Activated CD4-positive, alpha-beta memory T cell treated with anti-CD3 and anti-CD28 coated beads for 36 hours (primary cell): ENCODE measurements at regions of chr6 and their contacts with region 1.

Region 1: DNA sequence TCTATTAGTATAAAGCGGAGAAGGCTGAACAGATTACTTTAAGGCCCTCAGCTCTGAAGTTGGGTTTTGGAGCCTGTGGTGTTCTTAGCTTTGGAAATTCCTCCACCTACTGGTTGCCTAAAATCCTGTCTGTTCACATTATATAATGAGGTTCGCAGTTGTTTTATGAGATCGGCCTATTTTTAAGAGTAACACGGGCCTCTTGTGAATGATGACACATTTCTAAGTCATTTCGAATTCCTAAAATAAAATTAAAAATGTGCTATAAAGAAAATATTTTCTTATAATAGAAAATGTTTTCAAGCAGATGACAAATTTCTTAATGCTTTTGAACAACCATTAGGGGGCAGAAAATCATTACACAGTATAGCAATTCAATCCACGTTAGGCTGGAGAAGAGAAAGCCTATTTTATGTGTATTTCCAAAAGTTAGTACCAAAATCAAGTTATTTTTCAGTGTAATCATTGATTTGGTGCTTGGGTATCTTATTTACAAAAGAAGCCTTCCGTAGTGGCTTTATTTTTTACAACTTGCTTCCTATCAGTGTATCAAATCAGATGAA is 15.8 kb upstream of the FAM8A1 start:
- DNase-seq: no peak
- H3K4me3 Mint-ChIP-seq: no peak overlapping the region
- H3K27ac Mint-ChIP-seq: no peak overlapping the region
- H3K4me1 Mint-ChIP-seq: peaks cover 7% of the 10 kb centered on the region
- H3K27me3 Mint-ChIP-seq: peaks cover 5% of the 10 kb centered on the region

Region 2: DNA sequence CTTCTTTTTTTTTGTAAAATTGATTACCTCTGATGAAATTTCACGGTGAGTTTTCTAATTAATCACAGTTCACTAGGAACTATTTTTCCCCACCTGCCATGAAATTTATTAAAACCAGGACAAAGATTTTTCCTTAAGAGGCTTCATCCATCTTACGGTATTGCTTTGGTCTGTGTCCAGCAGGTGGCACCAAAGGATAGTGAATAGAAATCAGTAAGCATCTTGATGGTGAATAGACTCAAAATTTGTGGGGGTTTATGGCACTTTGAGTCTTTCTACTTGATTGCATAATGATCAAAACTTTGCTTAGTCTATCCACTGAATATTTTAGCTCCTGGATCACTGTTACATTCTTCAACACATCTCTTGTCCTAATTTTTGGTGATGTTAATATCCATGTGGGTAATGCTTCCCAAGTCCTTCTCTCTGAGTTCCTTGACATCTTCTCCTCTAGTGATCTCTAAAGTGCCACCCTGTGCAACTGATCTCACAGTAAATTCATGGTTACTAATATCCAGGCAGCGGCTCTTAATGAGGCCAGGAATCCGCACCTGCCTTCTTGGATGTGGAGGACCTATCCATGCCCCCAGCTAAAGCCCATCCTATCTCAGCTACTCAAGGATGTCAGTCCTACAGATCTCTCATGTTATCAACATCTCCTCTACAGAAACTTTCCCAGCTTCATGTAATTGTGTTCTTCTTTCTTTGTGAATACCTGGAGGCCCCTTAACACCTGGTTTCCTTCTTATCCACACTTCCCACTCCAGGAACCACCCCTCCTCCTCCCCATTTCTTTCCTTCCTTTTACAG is 428.0 kb before region 1 on chr6:
- CTCF ChIA-PET with region 1: interaction called, 11 read pairs
- POLR2A ChIA-PET with region 1: no interaction called
- intact Hi-C with region 1: loop called (anchors 1 kb)
- DNase-seq: peak; percentile 53
- H3K4me3 Mint-ChIP-seq: no peak overlapping the region
- H3K27ac Mint-ChIP-seq: no peak overlapping the region
- H3K4me1 Mint-ChIP-seq: no peaks in the 10 kb centered on the region
- H3K27me3 Mint-ChIP-seq: peaks cover 8% of the 10 kb centered on the region

Region 3: GRCh38 chr6:17536586-17536985 is 47.7 kb before region 1 on chr6:
- CTCF ChIA-PET with region 1: interaction called, 3 read pairs
- POLR2A ChIA-PET with region 1: no interaction called
- intact Hi-C with region 1: loop called (anchors 1 kb)
- DNase-seq: peak; percentile 60
- H3K4me3 Mint-ChIP-seq: no peak overlapping the region
- H3K27ac Mint-ChIP-seq: no peak overlapping the region
- H3K4me1 Mint-ChIP-seq: peaks cover 2% of the 10 kb centered on the region
- H3K27me3 Mint-ChIP-seq: peaks cover 20% of the 10 kb centered on the region

Region 4: GRCh38 chr6:17808609-17809008 is 224.3 kb after region 1 on chr6:
- CTCF ChIA-PET with region 1: interaction called, 19 read pairs
- POLR2A ChIA-PET with region 1: no interaction called
- intact Hi-C with region 1: loop called (anchors 1 kb)
- DNase-seq: no peak
- H3K4me3 Mint-ChIP-seq: no peak overlapping the region
- H3K27ac Mint-ChIP-seq: no peak overlapping the region
- H3K4me1 Mint-ChIP-seq: no peaks in the 10 kb centered on the region
- H3K27me3 Mint-ChIP-seq: peaks cover 7% of the 10 kb centered on the region

Region 5: DNA sequence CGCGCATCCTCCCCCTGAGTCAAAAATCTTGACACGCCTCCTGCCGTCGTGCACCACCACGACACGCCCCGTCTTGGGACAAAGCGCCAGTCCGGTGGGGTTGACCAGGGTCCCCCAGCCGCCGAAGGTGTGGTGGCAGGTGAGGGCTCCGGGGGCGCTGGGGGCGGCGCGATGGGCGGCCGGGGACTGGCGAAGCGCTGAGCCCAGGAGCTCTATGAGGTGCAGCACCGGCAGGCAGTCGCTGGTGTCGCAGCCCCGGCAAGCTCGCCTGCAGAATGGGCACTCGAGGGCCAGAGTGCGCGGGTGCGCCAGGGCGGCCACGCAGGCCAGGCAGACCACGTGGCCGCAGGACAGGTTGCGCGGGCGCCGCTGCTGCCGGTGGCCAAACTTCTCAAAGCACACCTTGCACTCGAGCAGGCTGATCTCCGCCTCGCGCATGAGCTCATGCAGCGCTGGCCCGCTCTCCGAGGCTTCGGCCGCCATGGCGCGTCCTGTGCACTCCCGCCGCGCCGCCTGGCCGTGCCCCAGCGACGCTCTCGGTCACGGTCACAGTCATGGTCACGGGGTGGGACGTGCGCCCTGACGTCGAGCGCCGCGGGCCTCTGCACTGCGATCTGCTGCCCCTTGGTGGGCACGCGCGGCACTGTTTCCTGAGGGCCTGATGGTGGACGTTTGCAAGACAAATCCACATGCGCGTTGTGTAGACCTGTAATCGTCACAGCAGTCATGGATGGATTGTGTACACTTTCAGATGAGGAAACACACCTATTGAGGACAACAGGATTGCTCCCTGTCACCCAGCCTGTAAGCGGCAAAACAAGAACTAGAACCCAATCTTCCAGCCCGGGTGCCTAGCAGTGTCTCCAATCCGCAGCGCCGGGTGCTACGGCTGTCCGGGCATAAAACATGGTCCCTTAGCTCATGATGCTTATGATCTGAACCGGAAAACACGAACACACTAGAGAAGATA is 538.1 kb after region 1 on chr6 and contains the start of gene NHLRC1:
- CTCF ChIA-PET with region 1: no interaction called
- POLR2A ChIA-PET with region 1: no interaction called
- intact Hi-C with region 1: loop called (anchors 10 kb)
- DNase-seq: peak; percentile 87
- H3K4me3 Mint-ChIP-seq: peak within 1 kb of the TSS; percentile 57
- H3K27ac Mint-ChIP-seq: no peak within 1 kb of the TSS
- H3K4me1 Mint-ChIP-seq: peaks cover 13% of the 10 kb centered on the region
- H3K27me3 Mint-ChIP-seq: peaks cover 24% of the 10 kb centered on the region
- total RNA-seq, gene NHLRC1: 0.10 to 0.19 TPM

Region 6: DNA sequence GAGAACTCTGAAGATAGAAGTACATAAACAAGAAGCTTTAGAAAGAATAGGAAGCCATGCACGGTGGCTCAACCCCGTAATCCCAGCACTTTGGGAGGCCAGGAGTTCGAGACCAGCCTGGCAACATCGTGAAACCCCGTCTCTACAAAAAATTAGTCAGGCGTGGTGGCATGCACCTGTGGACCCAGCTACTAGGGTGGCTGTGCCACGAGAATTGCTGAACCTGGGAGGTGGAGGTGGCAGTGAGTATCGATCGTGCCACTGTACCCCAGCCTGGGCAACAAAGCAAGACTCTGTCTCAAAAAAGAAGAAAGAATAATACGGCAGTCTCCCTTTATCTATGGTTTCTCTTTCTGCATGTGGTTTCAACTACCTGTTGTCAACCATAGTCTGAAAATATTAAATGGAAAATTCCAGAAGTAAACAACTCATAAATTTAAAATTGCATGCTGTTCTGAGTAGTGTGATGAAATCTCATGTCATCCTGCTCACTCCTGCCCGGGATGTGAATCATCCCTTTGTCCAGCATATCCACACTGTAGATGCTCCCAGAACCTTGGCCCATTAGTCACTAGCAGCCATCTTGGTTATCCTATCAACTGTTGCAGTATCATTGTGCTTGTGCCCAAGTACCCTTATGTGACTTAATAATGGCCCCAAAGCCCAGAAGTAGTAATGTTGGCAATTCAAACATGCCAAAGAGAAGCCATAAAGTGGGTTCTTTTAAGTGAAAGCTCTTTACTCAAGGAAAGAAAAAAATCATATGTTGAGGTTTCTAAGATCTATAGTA is 657.9 kb after region 1 on chr6:
- CTCF ChIA-PET with region 1: no interaction called
- POLR2A ChIA-PET with region 1: no interaction called
- intact Hi-C with region 1: no loop called
- DNase-seq: no peak
- H3K4me3 Mint-ChIP-seq: no peak overlapping the region
- H3K27ac Mint-ChIP-seq: peak overlapping the region; percentile 64
- H3K4me1 Mint-ChIP-seq: peaks cover 57% of the 10 kb centered on the region
- H3K27me3 Mint-ChIP-seq: no peaks in the 10 kb centered on the region